ENCODE measurements at regions of chr3 and their contacts with region 1.

Region 1: GRCh38 chr3:122646146-122646988 is 34.3 kb upstream of the PARP14 start:
- DNase-seq: no peak
- H3K4me3 ChIP-seq: peak overlapping the region in 1 of 3 experiments; percentile 38
- H3K4me3 Mint-ChIP-seq: peak overlapping the region in 1 of 2 donors; percentile 62
- H3K27ac ChIP-seq: peak overlapping the region in 1 of 2 donors; percentile 49
- H3K27ac Mint-ChIP-seq: peak overlapping the region in 2 of 7 donors; percentile 24 to 55
- H3K4me1 ChIP-seq: peaks cover 0 to 8% of the 10 kb centered on the region in 2 donors
- H3K4me1 Mint-ChIP-seq: peaks cover 3% of the 10 kb centered on the region
- H3K27me3 ChIP-seq: no peaks in the 10 kb centered on the region
- H3K27me3 Mint-ChIP-seq: peaks cover 0 to 12% (median 1%) of the 10 kb centered on the region in 3 donors
- CTCF ChIP-seq: no peak

Region 2: DNA sequence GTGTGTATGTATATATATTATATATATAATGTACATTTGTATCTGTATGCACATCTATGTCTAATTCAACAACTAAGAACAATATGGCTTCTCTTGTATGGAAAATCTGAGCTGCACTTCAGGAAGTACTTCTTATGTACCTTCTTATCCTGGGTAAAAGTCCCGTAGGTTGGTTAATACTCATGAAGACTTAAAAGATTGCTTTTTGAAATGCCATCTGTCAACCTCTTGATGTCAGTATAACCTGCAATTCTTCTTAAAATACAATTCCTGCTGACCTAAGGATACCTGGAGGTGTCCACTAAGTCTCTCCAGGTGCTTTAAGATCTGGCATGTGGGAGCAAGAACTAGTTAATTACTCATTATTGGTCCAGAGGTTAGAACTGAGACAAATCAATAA is 1317.3 kb before region 1 on chr3:
- intact Hi-C with region 1: no loop called
- DNase-seq: no peak
- H3K4me3 ChIP-seq: no peak overlapping the region
- H3K4me3 Mint-ChIP-seq: no peak overlapping the region
- H3K27ac ChIP-seq: no peak overlapping the region
- H3K27ac Mint-ChIP-seq: no peak overlapping the region
- H3K4me1 ChIP-seq: no peaks in the 10 kb centered on the region
- H3K4me1 Mint-ChIP-seq: no peaks in the 10 kb centered on the region
- H3K27me3 ChIP-seq: no peaks in the 10 kb centered on the region
- H3K27me3 Mint-ChIP-seq: peaks cover 0 to 5% (median 0%) of the 10 kb centered on the region in 3 donors
- CTCF ChIP-seq: no peak

Region 3: DNA sequence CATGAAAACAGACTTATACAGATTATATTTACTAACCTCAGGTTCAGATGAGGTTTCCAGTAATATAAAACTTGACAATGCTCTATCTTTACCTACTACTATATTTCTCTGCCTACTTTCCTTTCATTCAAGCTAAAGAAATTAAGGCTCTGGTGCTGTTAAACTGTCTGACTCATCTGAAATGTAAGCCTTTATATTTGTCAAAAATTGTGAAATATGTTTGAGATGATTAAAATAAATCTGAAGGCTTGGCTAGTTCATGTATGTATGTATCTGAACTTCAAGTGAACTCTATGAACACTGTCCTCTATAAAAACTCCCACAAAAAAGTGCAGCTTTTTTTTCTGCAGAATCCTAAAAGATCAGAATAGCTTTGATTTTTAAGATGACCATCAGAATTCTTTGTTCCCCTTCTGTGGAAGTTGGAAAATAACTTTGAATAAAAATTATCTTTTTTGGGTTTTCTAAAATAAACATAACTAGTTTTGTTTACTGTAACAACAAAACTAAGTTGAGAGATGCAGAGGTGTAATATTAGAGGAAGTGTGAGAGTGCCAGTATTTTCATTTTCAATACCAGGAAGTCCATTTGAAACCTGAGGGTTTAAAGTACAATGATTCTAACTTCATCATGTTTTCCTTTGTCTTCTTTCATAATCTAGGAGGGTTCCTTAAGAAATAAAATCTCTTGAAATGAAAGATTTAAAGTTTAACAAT is 666.5 kb before region 1 on chr3:
- intact Hi-C with region 1: loop called in 1 of 2 experiments (anchors 5 kb)
- DNase-seq: peak in 2 of 3 donors; percentile 11 to 27
- H3K4me3 ChIP-seq: no peak overlapping the region
- H3K4me3 Mint-ChIP-seq: no peak overlapping the region
- H3K27ac ChIP-seq: peak overlapping the region in 1 of 2 donors; percentile 18
- H3K27ac Mint-ChIP-seq: peak overlapping the region in 3 of 7 donors; percentile 23 to 80 (median 53)
- H3K4me1 ChIP-seq: peaks cover 11 to 15% of the 10 kb centered on the region in 2 donors
- H3K4me1 Mint-ChIP-seq: peaks cover 23% of the 10 kb centered on the region
- H3K27me3 ChIP-seq: no peaks in the 10 kb centered on the region
- H3K27me3 Mint-ChIP-seq: no peaks in the 10 kb centered on the region
- CTCF ChIP-seq: no peak